Activated naive CD4-positive, alpha-beta T cell treated with anti-CD3 and anti-CD28 coated beads for 36 hours (primary cell): ENCODE measurements at regions of chr12 and their contacts with region 1.

Region 1: DNA sequence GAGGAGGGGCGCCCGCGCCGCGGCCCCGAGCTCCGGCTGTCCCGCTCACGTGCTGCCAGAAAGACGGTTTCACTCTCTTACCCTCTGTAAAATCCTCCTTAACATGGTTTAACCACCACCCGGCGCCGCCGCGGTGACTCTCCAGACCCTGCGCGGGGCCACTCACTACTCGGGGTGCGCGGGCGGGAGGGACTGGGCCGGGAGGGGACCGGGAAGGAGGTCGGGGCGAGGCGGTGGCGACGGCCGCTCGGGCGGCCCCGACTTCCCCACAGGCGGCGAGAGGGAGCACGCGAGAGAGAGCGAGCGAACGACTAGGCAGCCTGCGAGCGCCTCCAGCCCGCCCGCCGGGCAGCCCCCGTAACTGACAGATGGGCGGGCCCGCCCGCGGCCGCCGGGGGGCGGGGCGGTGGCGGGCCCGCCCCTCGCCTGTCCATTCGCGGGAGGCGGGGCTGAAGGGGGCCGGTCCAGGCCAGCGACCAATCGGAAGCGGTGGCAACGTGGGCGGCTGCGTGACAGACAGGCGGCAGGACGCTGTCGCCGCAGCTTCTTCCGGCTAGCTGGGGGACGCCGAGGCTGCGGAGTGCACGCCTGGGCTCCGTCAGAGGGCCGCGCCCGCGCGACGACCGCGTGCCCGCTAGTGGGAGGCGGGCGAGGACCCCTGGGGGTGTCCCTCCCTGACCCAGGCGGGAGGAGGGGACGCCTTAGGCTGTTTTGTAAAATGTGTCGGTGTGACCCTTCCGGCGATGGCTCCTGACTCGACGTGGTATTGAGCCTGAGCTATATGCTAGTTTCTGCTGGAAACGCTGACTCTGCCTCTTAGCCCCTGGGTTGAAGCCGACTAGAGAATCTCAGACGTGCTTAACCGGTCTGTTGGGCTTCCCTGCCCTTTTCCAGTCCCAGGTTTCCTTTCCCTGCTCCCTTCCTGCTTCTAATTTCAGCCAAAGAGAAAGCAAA is at the start of gene EEA1:
- DNase-seq: peak; percentile 97
- H3K4me3 Mint-ChIP-seq: peak within 1 kb of the TSS; percentile 90
- H3K27ac Mint-ChIP-seq: peak within 1 kb of the TSS; percentile 93
- H3K4me1 Mint-ChIP-seq: peaks cover 28% of the 10 kb centered on the region
- H3K27me3 Mint-ChIP-seq: no peaks in the 10 kb centered on the region
- total RNA-seq, gene EEA1: 15.6 to 17.6 TPM

Region 2: GRCh38 chr12:92396647-92397252 is 532.5 kb before region 1 on chr12:
- CTCF ChIA-PET with region 1: no interaction called
- intact Hi-C with region 1: loop called (anchors 5 kb)
- DNase-seq: peak; percentile 39
- H3K4me3 Mint-ChIP-seq: no peak overlapping the region
- H3K27ac Mint-ChIP-seq: peak overlapping the region; percentile 73
- H3K4me1 Mint-ChIP-seq: peaks cover 97% of the 10 kb centered on the region
- H3K27me3 Mint-ChIP-seq: no peaks in the 10 kb centered on the region

Region 3: GRCh38 chr12:92899388-92900001 is 29.7 kb before region 1 on chr12:
- CTCF ChIA-PET with region 1: no interaction called
- intact Hi-C with region 1: no loop called
- DNase-seq: no peak
- H3K4me3 Mint-ChIP-seq: no peak overlapping the region
- H3K27ac Mint-ChIP-seq: no peak overlapping the region
- H3K4me1 Mint-ChIP-seq: peaks cover 23% of the 10 kb centered on the region
- H3K27me3 Mint-ChIP-seq: no peaks in the 10 kb centered on the region

Region 4: DNA sequence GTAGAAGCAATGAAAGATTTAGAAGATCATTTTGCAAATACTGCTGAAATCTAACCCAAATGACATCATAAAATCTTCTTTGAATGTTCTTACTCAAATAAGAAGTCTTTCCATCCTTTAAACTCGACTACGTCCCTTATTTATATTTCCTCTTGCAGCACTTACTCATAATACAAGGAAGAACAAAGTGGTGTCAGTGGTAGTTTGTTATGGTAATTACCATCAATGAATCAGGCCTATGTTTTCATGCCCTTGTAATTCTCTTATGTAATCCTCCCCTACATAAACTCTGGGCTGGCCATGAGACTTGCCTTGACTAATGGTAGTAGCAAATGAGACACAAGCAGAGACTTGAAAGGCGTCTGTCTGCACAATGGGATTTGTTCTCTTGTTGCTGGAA is 17.2 kb before region 1 on chr12:
- CTCF ChIA-PET with region 1: interaction called, 5 read pairs
- intact Hi-C with region 1: loop called (anchors 1 kb)
- DNase-seq: peak; percentile 60
- H3K4me3 Mint-ChIP-seq: no peak overlapping the region
- H3K27ac Mint-ChIP-seq: peak overlapping the region; percentile 74
- H3K4me1 Mint-ChIP-seq: peaks cover 56% of the 10 kb centered on the region
- H3K27me3 Mint-ChIP-seq: no peaks in the 10 kb centered on the region

Region 5: DNA sequence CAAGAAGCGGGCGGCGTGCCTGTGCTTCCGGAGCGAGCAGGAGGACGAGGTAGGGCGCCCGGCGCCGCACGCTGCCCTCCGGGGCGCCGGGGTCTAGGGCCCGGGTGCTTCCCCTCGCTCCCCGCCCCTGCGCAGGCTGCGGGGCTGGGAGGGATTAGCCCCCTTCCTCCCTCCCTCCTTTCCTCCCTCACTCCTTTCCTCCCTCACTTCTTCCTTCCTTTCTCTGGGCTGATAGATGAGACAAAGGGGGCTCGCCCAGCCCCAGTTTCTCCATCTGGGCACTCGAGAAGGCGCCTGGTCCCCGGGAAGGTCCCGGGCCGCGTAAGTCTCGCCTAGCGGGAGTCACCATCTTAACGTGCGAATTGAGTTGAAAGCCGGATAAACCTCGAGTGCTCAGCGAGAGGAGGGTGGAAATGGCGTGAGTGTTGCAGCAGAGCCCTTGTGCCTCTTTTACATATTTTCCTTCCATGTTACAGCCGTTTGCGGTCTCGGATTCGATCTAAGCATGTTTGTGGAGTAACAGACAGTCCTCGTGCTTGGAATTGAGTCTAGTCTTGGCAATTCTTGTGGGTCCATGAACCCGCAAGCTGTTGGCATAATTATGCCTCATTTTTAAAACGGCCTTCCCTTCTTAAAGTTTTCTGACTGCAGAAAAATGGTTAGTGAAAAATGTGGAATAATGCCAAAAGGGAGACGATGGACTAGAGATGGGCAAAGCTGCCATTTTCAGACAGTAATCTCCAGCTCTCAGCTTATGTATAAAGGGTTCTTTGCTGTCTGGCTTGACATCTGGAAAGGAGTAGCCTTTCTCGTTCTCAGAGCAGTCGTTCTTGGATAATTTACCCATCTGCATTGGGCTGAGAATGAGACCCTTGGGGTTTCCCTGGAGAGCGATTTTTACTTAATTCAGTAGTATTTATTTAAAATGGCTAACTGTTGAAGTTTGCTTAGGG is 449.4 kb after region 1 on chr12:
- CTCF ChIA-PET with region 1: no interaction called
- intact Hi-C with region 1: loop called (anchors 1 kb)
- DNase-seq: peak; percentile 74
- H3K4me3 Mint-ChIP-seq: peak overlapping the region; percentile 99
- H3K27ac Mint-ChIP-seq: peak overlapping the region; percentile 99
- H3K4me1 Mint-ChIP-seq: peaks cover 38% of the 10 kb centered on the region
- H3K27me3 Mint-ChIP-seq: no peaks in the 10 kb centered on the region

Region 6: GRCh38 chr12:93677195-93678064 is 748.2 kb after region 1 on chr12 and contains the start of gene CRADD:
- CTCF ChIA-PET with region 1: no interaction called
- intact Hi-C with region 1: loop called (anchors 1 kb)
- DNase-seq: peak; percentile 92
- H3K4me3 Mint-ChIP-seq: peak within 1 kb of the TSS; percentile 89
- H3K27ac Mint-ChIP-seq: peak within 1 kb of the TSS; percentile 99
- H3K4me1 Mint-ChIP-seq: peaks cover 40% of the 10 kb centered on the region
- H3K27me3 Mint-ChIP-seq: peaks cover 9% of the 10 kb centered on the region
- total RNA-seq, gene CRADD: 14.3 to 15.6 TPM